Right ventricle myocardium inferior (tissue), 1 donor: ENCODE measurements at regions of chr16 and their contacts with region 1.

Region 1: GRCh38 chr16:49407873-49408550 is 34.4 kb downstream of the C16orf78 start:
- DNase-seq: peak; percentile 88
- ATAC-seq: peak; percentile 96

Region 2: GRCh38 chr16:49330562-49331201 is 77.3 kb before region 1 on chr16:
- intact Hi-C with region 1: no loop called
- DNase-seq: no peak
- ATAC-seq: no peak

Region 3: DNA sequence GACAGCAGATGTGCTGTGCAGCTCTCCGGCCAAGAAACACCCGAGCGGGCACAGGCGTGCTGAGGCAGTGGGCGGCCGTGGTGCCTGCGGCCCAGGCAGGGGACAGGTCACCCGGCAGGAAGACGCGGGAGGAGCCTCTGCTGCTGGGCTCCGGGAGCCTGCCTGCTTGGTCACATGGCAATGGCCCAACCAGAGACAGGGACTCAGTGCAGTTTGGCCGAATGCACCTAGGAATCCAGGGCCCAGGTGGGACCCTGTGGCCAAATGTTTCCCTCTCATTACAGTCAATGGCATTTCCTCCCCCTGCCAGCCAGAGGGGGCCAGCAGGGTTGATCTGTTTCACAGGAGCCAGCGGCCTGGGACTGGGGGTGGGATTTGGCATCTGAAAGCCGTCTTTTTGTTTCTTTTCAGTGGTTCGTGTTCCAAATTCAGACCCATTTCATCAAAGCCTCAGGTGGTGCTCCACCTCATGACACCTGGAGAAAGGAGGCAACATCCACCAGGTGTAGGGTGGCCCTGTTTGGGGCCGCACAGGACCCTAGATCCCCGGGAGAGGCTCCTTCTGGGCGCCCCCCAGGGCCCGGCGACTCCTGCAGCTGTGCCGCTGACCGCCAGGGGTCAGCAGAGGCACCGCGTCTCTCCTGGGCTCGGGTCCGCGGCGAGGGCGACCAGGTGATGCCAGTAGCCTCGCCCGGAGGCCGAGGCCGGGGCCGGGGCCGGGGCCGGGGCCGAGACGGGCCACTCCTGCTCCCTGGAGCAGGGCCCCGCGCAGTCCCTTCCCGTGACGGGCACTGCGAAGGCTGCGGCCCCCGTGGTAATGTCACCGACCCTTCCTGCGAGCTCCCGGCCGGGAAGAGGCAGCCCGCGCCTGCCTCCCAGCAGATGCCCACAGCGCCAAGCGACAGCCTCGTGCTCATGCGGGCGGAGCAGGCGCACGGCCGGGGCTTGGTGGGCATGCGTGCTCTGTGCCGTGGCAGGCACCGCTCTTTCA is 84.1 kb after region 1 on chr16:
- intact Hi-C with region 1: loop called (anchors 5 kb)
- DNase-seq: peak; percentile 74
- ATAC-seq: peak; percentile 67

Region 4: GRCh38 chr16:49592546-49593423 is 184.8 kb after region 1 on chr16:
- intact Hi-C with region 1: loop called (anchors 2 kb)
- DNase-seq: no peak
- ATAC-seq: no peak

Region 5: DNA sequence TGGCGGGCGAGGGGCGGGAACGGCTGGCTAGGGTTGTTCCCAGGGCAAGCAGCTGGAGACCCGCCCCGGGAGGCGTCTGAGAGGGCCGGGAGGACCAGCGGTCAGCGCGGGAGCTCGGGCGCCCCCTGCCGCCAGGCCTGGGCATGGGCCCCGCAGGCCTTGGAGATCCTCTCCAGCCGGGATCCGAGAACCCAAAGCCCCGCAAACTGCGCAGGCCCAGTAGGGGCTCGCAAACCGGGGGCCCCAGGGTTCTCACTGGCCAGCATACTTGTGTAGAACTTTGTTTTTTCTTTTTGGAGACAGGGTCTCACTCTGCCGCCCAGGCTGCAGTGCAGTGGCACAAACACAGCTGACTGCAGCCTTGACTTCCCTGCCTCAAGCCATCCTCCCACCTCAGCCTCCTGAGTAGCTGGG is 468.7 kb after region 1 on chr16:
- intact Hi-C with region 1: loop called (anchors 5 kb)
- DNase-seq: peak; percentile 83
- ATAC-seq: peak; percentile 91

Region 6: DNA sequence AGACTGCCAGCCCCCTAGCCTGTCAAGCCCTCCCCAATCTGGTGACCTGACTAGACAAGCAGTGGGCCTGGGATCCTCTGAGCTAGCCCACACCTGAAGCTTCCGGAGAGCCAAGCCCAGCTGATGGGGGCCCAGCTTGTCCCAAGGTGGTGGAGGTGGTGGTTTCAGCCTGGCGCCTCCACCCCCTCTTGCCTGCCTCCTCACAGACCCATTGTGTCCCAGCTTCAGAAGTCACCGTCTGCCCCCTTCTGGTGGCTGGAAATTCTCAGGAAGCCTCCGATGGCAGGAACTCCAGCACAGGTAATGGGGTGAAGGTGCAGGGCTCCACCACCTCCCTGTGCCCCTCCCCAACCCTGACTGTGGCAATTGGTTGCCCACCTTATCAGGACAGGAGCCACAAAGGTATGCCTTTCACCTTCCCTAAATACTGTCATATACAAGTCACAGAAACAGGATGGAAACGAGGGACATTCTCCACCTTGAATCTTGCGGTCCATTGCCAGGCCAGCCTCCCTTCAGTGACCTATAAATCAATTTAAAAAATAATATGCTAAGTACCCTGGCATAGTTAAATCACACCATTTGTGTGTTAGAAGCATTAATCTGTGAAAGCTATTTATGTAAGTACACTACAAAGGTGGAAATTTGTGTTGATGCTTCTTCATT is 513.9 kb after region 1 on chr16:
- intact Hi-C with region 1: loop called (anchors 2 kb)
- DNase-seq: no peak
- ATAC-seq: peak; percentile 78